Natural killer cell (primary cell): ENCODE measurements at regions of chr12 and their contacts with region 1.

Region 1: DNA sequence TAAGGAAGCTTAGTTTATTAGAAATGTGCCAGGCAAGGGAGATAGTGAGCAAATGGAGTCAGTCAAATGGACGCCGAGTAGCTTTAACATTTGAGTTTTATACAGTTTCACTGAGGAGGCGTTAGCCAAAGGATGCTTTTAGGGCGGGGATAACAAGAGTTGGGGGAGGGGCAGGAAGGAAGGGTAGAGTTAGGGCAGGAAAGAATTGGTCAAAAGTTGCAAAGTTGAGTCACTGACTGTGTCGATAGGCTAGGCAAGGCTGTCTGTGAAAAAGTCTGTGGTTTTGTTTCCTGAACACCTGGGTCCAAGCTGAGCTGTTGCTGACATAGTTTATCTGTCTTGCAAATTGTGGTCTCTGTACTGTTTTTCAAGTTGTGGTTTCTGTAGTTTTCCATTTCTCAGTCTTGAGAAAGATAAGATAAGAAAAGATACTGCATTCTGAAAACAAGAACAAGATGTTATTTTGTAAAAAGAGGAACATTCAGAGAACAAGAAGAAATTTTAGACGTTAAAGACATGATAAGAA is 62.6 kb upstream of the RESF1 start:
- DNase-seq: peak; percentile 70 to 96
- ATAC-seq: peak; percentile 88 to 99 (median 90)
- H3K4me3 ChIP-seq: no peak overlapping the region
- H3K4me3 Mint-ChIP-seq: peak overlapping the region; percentile 90
- H3K27ac ChIP-seq: peak overlapping the region; percentile 91
- H3K27ac Mint-ChIP-seq: peak overlapping the region; percentile 86 to 98
- H3K4me1 ChIP-seq: peaks cover 76% of the 10 kb centered on the region
- H3K4me1 Mint-ChIP-seq: peaks cover 66 to 74% of the 10 kb centered on the region in 2 donors
- H3K27me3 ChIP-seq: no peaks in the 10 kb centered on the region
- H3K27me3 Mint-ChIP-seq: no peaks in the 10 kb centered on the region
- CTCF ChIP-seq: no peak

Region 2: DNA sequence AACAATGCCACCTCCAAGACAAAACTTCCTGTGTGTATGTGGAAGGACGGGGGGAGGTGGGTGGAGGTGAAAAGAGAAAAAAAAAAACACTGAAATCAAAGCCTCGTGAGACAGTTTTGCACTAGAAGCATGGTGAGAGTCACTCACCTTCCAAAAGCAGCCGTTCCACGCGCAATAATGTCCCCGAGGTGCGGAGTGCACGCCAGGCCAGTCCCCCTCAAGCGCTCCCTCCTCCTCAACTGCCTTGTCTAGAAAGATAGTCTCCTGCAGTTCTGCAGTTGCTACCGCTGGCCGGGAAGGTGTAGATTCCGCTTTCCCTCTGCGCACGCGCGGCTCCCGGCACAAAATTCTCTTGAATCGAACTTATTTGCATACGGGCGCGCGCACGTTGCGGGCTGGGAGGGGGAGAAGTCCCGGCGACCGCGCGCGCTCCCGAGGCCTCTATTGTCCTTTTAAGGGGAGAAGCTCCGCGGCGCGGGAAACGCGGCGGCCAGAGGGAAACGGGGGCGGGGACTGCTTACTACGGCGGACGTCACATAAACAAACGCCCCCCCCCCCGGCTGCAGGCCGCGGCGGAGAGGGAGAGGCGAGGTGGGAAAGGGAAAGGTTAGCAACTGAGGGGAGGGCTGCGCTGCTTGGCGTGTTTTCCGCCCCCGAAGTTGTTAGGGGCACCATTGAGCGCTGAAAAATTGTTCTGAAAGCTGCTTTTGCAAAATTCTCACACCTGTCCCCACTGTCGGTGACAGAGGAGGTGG is 570.5 kb before region 1 on chr12 and contains the start of gene SINHCAF:
- intact Hi-C with region 1: loop called (anchors 10 kb)
- DNase-seq: peak; percentile 96 to 99
- ATAC-seq: peak; percentile 60 to 81 (median 71)
- H3K4me3 ChIP-seq: peak within 1 kb of the TSS; percentile 74
- H3K4me3 Mint-ChIP-seq: peak within 1 kb of the TSS; percentile 99
- H3K27ac ChIP-seq: peak within 1 kb of the TSS; percentile 94
- H3K27ac Mint-ChIP-seq: peak within 1 kb of the TSS; percentile 91 to 96
- H3K4me1 ChIP-seq: peaks cover 9% of the 10 kb centered on the region
- H3K4me1 Mint-ChIP-seq: peaks cover 20 to 27% of the 10 kb centered on the region in 2 donors
- H3K27me3 ChIP-seq: no peaks in the 10 kb centered on the region
- H3K27me3 Mint-ChIP-seq: no peaks in the 10 kb centered on the region
- CTCF ChIP-seq: no peak
- total RNA-seq, gene SINHCAF: 40.4 to 55.0 (median 41.0) TPM

Region 3: GRCh38 chr12:31672521-31672920 is 224.1 kb before region 1 on chr12:
- intact Hi-C with region 1: no loop called
- DNase-seq: no peak
- ATAC-seq: no peak
- H3K4me3 ChIP-seq: no peak overlapping the region
- H3K4me3 Mint-ChIP-seq: no peak overlapping the region
- H3K27ac ChIP-seq: no peak overlapping the region
- H3K27ac Mint-ChIP-seq: no peak overlapping the region
- H3K4me1 ChIP-seq: no peaks in the 10 kb centered on the region
- H3K4me1 Mint-ChIP-seq: no peaks in the 10 kb centered on the region
- H3K27me3 ChIP-seq: no peaks in the 10 kb centered on the region
- H3K27me3 Mint-ChIP-seq: no peaks in the 10 kb centered on the region
- CTCF ChIP-seq: no peak

Region 4: GRCh38 chr12:31722580-31722979 is 174.0 kb before region 1 on chr12:
- intact Hi-C with region 1: loop called (anchors 1 kb)
- DNase-seq: peak in 1 of 2 donors; percentile 6
- ATAC-seq: no peak
- H3K4me3 ChIP-seq: no peak overlapping the region
- H3K4me3 Mint-ChIP-seq: peak overlapping the region; percentile 87
- H3K27ac ChIP-seq: peak overlapping the region; percentile 5
- H3K27ac Mint-ChIP-seq: peak overlapping the region; percentile 89
- H3K4me1 ChIP-seq: peaks cover 32% of the 10 kb centered on the region
- H3K4me1 Mint-ChIP-seq: peaks cover 45 to 55% of the 10 kb centered on the region in 2 donors
- H3K27me3 ChIP-seq: no peaks in the 10 kb centered on the region
- H3K27me3 Mint-ChIP-seq: peaks cover 7 to 12% of the 10 kb centered on the region in 2 donors
- CTCF ChIP-seq: no peak

Region 5: GRCh38 chr12:31790759-31791158 is 105.8 kb before region 1 on chr12:
- intact Hi-C with region 1: loop called (anchors 1 kb)
- DNase-seq: no peak
- ATAC-seq: peak; percentile 56 to 61 (median 61)
- H3K4me3 ChIP-seq: no peak overlapping the region
- H3K4me3 Mint-ChIP-seq: peak overlapping the region; percentile 81
- H3K27ac ChIP-seq: no peak overlapping the region
- H3K27ac Mint-ChIP-seq: peak overlapping the region; percentile 85 to 86
- H3K4me1 ChIP-seq: peaks cover 16% of the 10 kb centered on the region
- H3K4me1 Mint-ChIP-seq: peaks cover 30 to 34% of the 10 kb centered on the region in 2 donors
- H3K27me3 ChIP-seq: no peaks in the 10 kb centered on the region
- H3K27me3 Mint-ChIP-seq: no peaks in the 10 kb centered on the region
- CTCF ChIP-seq: no peak

Region 6: GRCh38 chr12:31931796-31932715 is 35.5 kb after region 1 on chr12:
- intact Hi-C with region 1: loop called (anchors 1 kb)
- DNase-seq: peak; percentile 49 to 69
- ATAC-seq: peak; percentile 93 to 98 (median 94)
- H3K4me3 ChIP-seq: no peak overlapping the region
- H3K4me3 Mint-ChIP-seq: peak overlapping the region; percentile 41
- H3K27ac ChIP-seq: peak overlapping the region; percentile 53
- H3K27ac Mint-ChIP-seq: peak overlapping the region; percentile 62 to 81
- H3K4me1 ChIP-seq: peaks cover 47% of the 10 kb centered on the region
- H3K4me1 Mint-ChIP-seq: peaks cover 51 to 58% of the 10 kb centered on the region in 2 donors
- H3K27me3 ChIP-seq: no peaks in the 10 kb centered on the region
- H3K27me3 Mint-ChIP-seq: no peaks in the 10 kb centered on the region
- CTCF ChIP-seq: no peak

Region 7: DNA sequence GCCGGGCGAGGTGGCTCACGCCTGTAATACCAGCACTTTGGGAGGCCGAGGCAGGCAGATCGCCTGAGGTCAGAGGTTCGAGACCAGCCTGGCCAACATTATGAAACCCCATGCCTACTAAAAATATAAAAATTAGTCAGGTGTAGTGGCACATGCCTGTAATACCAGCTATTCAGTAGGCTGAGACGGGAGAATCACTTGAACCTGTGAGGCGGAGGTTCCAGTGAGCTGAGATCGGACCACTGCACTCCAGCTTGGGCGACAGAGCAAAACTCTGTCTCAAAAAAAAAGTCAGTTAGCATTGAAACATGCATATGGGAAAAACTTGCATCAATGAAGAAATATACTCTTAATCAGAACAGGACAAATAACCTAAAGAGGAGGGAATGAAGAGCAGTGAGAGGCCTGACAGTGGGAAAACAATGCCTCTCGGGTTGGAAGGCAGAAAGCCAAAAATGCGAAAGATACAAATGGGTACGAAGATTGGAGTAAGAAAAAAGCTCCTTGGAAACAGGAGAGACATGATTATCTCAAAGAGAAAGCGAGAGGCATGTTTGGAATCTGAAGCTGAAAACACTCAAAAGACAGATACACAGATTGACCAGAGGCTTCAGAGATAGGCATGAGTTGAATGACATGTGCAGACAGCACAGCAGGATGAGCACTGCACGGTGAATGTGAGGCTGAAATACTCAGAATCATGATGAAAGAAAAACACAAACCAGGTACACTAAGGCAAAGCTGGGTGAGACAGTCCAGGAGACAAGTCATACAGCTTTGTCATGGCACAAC is 93.2 kb after region 1 on chr12:
- intact Hi-C with region 1: no loop called
- DNase-seq: no peak
- ATAC-seq: no peak
- H3K4me3 ChIP-seq: no peak overlapping the region
- H3K4me3 Mint-ChIP-seq: no peak overlapping the region
- H3K27ac ChIP-seq: no peak overlapping the region
- H3K27ac Mint-ChIP-seq: peak overlapping the region; percentile 65 to 73
- H3K4me1 ChIP-seq: no peaks in the 10 kb centered on the region
- H3K4me1 Mint-ChIP-seq: peaks cover 39 to 46% of the 10 kb centered on the region in 2 donors
- H3K27me3 ChIP-seq: no peaks in the 10 kb centered on the region
- H3K27me3 Mint-ChIP-seq: no peaks in the 10 kb centered on the region
- CTCF ChIP-seq: no peak